Mammary epithelial cell (primary cell): ENCODE measurements at regions of chr4 and their contacts with region 1.

Region 1: GRCh38 chr4:52750819-52751486 is at the start of gene ERVMER34-1:
- DNase-seq: peak; percentile 54
- H3K4me3 ChIP-seq: peak within 1 kb of the TSS; percentile 51 to 62 (median 60)
- H3K27ac ChIP-seq: peak within 1 kb of the TSS; percentile 38
- H3K4me1 ChIP-seq: peaks cover 11% of the 10 kb centered on the region
- H3K27me3 ChIP-seq: no peaks in the 10 kb centered on the region
- CTCF ChIP-seq: no peak
- total RNA-seq, gene ERVMER34-1: 5.7 to 6.6 TPM

Region 2: DNA sequence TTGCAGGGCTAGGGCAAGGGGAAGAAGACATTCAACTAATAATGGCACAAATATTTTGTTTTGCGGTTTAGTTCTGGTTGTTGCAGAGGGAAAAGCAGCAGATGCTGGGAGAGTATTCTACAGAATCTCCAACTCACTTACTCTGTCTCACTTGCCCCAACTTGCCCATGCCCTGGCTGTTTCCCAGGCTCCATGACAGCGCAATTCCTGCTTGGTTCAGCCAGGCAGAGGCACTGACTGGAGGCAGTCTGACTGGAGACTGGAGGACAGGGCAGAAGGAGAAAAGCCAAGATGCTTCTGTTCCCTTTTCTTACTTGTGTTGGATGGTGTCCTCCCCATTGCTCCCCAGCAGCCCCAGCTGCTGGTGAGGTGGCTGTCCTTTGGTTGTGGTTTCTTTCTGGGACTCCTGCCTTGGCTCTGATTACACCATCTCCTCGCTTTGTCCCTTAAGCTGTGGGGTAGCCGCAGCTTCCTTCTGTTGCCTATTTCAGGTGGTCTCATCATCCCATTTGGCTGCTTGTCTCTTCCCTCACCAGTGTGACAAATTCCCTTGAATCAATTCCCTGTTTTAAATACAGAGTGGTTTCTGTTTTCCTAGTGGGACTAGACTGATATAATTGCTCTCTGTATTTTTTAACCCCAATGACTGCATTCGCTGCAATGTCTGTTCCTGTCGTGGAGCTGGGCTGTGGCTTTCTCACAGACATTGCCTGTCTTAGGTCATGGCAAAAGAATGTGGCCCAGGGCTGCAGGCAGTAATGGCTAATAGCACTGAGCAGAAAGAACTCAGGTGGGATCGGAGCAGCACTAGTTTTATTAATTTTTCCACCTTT is 87.0 kb after region 1 on chr4:
- CTCF ChIA-PET with region 1: no interaction called
- dilution Hi-C with region 1: no loop called
- in situ Hi-C with region 1: no loop called
- intact Hi-C with region 1: loop called (anchors 5 kb)
- DNase-seq: peak; percentile 97
- H3K4me3 ChIP-seq: peak overlapping the region; percentile 9 to 32 (median 9)
- H3K27ac ChIP-seq: peak overlapping the region; percentile 99
- H3K4me1 ChIP-seq: peaks cover 57% of the 10 kb centered on the region
- H3K27me3 ChIP-seq: no peaks in the 10 kb centered on the region
- CTCF ChIP-seq: no peak

Region 3: DNA sequence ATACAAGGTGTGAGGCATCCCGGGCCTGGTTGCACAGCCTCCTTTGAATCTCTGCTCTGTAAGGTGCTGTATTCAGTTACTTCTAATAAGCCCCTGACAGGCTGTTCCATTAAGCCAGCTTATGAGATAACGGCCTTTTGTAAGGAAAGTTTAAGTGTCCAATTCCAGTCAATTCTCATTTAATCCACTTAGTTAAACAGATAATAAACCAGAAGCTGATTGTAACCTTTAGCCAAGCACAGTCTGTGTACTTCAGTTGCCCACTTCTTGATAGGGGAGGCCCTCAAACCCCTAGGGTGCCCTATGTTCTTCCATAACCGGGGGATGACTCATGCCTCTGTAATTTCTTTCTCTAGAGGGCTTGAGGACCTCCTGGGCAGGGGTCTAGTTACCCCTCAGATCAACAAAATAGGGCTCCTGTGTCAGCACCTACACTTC is 174.6 kb after region 1 on chr4:
- CTCF ChIA-PET with region 1: no interaction called
- dilution Hi-C with region 1: no loop called
- in situ Hi-C with region 1: loop called in 1 of 2 experiments (anchors 25 kb)
- intact Hi-C with region 1: no loop called
- DNase-seq: no peak
- H3K4me3 ChIP-seq: no peak overlapping the region
- H3K27ac ChIP-seq: no peak overlapping the region
- H3K4me1 ChIP-seq: no peaks in the 10 kb centered on the region
- H3K27me3 ChIP-seq: no peaks in the 10 kb centered on the region
- CTCF ChIP-seq: no peak